Transverse colon (tissue), 4 donors: ENCODE measurements at regions of chr16 and their contacts with region 1.

Region 1: GRCh38 chr16:56191156-56191815 is at the start of gene GNAO1:
- DNase-seq: peak; percentile 56
- H3K4me3 ChIP-seq: peak within 1 kb of the TSS; percentile 48 to 83 (median 64)
- H3K27ac ChIP-seq: peak within 1 kb of the TSS; percentile 88 to 91 (median 90)
- H3K4me1 ChIP-seq: peaks cover 0 to 36% (median 12%) of the 10 kb centered on the region in 4 donors
- H3K27me3 ChIP-seq: peaks cover 78% of the 10 kb centered on the region
- CTCF ChIP-seq: no peak
- EP300 ChIP-seq: no peak
- POLR2A ChIP-seq: no peak
- total RNA-seq, gene GNAO1: 7.3 to 25.4 (median 11.3) TPM

Region 2: GRCh38 chr16:55853114-55853513 is 338.2 kb before region 1 on chr16:
- in situ Hi-C with region 1: no loop called
- intact Hi-C with region 1: no loop called
- DNase-seq: no peak
- H3K4me3 ChIP-seq: no peak overlapping the region
- H3K27ac ChIP-seq: no peak overlapping the region
- H3K4me1 ChIP-seq: no peaks in the 10 kb centered on the region
- H3K27me3 ChIP-seq: peaks cover 23% of the 10 kb centered on the region
- CTCF ChIP-seq: no peak
- EP300 ChIP-seq: no peak
- POLR2A ChIP-seq: no peak

Region 3: GRCh38 chr16:56211435-56211981 is 20.2 kb after region 1 on chr16:
- in situ Hi-C with region 1: no loop called
- intact Hi-C with region 1: loop called (anchors 1 kb)
- DNase-seq: peak; percentile 22
- H3K4me3 ChIP-seq: no peak overlapping the region
- H3K27ac ChIP-seq: peak overlapping the region; percentile 64 to 85 (median 78)
- H3K4me1 ChIP-seq: peaks cover 6 to 18% (median 11%) of the 10 kb centered on the region in 4 donors
- H3K27me3 ChIP-seq: no peaks in the 10 kb centered on the region
- CTCF ChIP-seq: no peak
- EP300 ChIP-seq: peak; percentile 54
- POLR2A ChIP-seq: no peak

Region 4: GRCh38 chr16:56269811-56270684 is 78.8 kb after region 1 on chr16:
- in situ Hi-C with region 1: no loop called
- intact Hi-C with region 1: loop called (anchors 5 kb)
- DNase-seq: peak; percentile 40
- H3K4me3 ChIP-seq: no peak overlapping the region
- H3K27ac ChIP-seq: peak overlapping the region; percentile 72 to 89 (median 82)
- H3K4me1 ChIP-seq: peaks cover 0 to 8% (median 3%) of the 10 kb centered on the region in 4 donors
- H3K27me3 ChIP-seq: no peaks in the 10 kb centered on the region
- CTCF ChIP-seq: peak in 4 of 5 experiments; percentile 9 to 28 (median 18)
- EP300 ChIP-seq: no peak
- POLR2A ChIP-seq: no peak